ENCODE measurements at regions of chrX and their contacts with region 1.

Region 1: GRCh38 chrX:154436983-154437719 is at the start of gene GDI1:
- DNase-seq: peak; percentile 44 to 65
- ATAC-seq: peak; percentile 43 to 80 (median 58)
- H3K4me3 ChIP-seq: peak within 1 kb of the TSS; percentile 50 to 89 (median 80)
- H3K27ac ChIP-seq: peak within 1 kb of the TSS; percentile 77 to 94 (median 90)
- H3K4me1 ChIP-seq: peaks cover 0 to 23% (median 13%) of the 10 kb centered on the region in 9 donors
- H3K27me3 ChIP-seq: no peaks in the 10 kb centered on the region
- CTCF ChIP-seq: no peak
- total RNA-seq, gene GDI1: 67.5 to 101 (median 77.5) TPM

Region 2: GRCh38 chrX:154478728-154479622 is 41.8 kb after region 1 on chrX and contains the start of gene LAGE3:
- intact Hi-C with region 1: loop called in 1 of 10 experiments (anchors 5 kb)
- DNase-seq: peak; percentile 91 to 94
- ATAC-seq: peak; percentile 95 to 98 (median 96)
- H3K4me3 ChIP-seq: peak within 1 kb of the TSS; percentile 14 to 61 (median 55)
- H3K27ac ChIP-seq: peak within 1 kb of the TSS; percentile 69 to 86 (median 85)
- H3K4me1 ChIP-seq: peaks cover 0 to 14% (median 2%) of the 10 kb centered on the region in 9 donors
- H3K27me3 ChIP-seq: peaks cover 0 to 7% (median 0%) of the 10 kb centered on the region in 7 donors
- CTCF ChIP-seq: no peak
- total RNA-seq, gene LAGE3: 13.7 to 21.3 (median 17.7) TPM